Activated CD4-positive, alpha-beta memory T cell treated with anti-CD3 and anti-CD28 coated beads for 36 hours (primary cell): ENCODE measurements at regions of chr7 and their contacts with region 1.

Region 1: DNA sequence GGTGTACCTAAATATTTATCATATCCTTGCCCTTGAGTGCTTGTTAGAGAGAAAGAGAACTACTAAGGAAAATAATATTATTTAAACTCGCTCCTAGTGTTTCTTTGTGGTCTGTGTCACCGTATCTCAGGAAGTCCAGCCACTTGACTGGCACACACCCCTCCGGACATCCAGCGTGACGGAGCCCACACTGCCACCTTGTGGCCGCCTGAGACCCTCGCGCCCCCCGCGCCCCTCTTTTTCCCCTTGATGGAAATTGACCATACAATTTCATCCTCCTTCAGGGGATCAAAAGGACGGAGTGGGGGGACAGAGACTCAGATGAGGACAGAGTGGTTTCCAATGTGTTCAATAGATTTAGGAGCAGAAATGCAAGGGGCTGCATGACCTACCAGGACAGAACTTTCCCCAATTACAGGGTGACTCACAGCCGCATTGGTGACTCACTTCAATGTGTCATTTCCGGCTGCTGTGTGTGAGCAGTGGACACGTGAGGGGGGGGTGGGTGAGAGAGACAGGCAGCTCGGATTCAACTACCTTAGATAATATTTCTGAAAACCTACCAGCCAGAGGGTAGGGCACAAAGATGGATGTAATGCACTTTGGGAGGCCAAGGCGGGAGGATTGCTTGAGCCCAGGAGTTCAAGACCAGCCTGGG is 11.4 kb downstream of the SERPINE1 start:
- DNase-seq: peak; percentile 94
- H3K4me3 Mint-ChIP-seq: peak overlapping the region; percentile 30
- H3K27ac Mint-ChIP-seq: peak overlapping the region; percentile 72
- H3K4me1 Mint-ChIP-seq: peaks cover 47% of the 10 kb centered on the region
- H3K27me3 Mint-ChIP-seq: peaks cover 16% of the 10 kb centered on the region

Region 2: GRCh38 chr7:101094416-101095375 is 43.6 kb before region 1 on chr7:
- CTCF ChIA-PET with region 1: interaction called, 9 read pairs
- POLR2A ChIA-PET with region 1: no interaction called
- intact Hi-C with region 1: loop called (anchors 1 kb)
- DNase-seq: peak; percentile 58
- H3K4me3 Mint-ChIP-seq: no peak overlapping the region
- H3K27ac Mint-ChIP-seq: no peak overlapping the region
- H3K4me1 Mint-ChIP-seq: peaks cover 12% of the 10 kb centered on the region
- H3K27me3 Mint-ChIP-seq: no peaks in the 10 kb centered on the region

Region 3: DNA sequence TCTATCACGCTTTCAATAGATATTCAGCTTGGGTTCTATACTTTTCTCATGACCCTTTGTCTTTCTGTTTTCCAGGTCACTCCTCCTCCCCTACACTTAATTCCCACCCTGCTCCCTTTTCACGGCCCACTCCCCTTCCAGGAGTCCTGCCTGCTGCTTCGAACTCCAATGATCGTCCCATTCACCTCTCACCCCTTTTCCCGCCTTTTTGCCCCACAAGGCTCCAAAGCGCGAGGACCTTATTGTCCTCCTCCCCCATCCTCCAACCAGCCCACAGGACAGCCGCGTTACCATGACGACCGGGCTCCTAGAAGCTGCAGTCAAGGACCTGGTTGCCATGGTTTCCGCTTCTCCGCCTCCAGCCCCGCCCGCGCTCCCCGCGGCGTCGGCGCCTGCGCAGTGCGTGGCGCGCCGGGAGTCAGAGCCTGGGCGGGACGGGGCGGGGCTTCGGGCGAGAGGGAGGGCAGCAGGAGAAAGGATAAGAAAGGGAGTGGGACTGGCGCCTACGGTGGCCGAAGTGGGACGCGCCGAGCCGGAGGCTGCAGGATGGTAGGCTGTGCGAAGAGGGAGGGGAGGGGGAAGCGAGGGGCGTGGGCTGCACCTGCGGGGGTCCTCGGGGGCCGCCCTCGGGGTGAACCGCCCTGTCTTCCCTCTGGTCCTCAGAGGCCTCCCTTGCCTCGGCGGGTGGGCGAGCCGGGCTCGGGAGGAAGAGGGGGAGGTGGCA is 15.8 kb after region 1 on chr7 and contains the start of gene AP1S1:
- CTCF ChIA-PET with region 1: interaction called, 34 read pairs
- POLR2A ChIA-PET with region 1: no interaction called
- intact Hi-C with region 1: loop called (anchors 1 kb)
- DNase-seq: peak; percentile 96
- H3K4me3 Mint-ChIP-seq: peak within 1 kb of the TSS; percentile 79
- H3K27ac Mint-ChIP-seq: peak within 1 kb of the TSS; percentile 47
- H3K4me1 Mint-ChIP-seq: peaks cover 10% of the 10 kb centered on the region
- H3K27me3 Mint-ChIP-seq: peaks cover 4% of the 10 kb centered on the region
- total RNA-seq, gene AP1S1: 41.1 to 44.7 TPM

Region 4: GRCh38 chr7:101173752-101174244 is 35.5 kb after region 1 on chr7:
- CTCF ChIA-PET with region 1: interaction called, 27 read pairs
- POLR2A ChIA-PET with region 1: no interaction called
- intact Hi-C with region 1: no loop called
- DNase-seq: peak; percentile 86
- H3K4me3 Mint-ChIP-seq: no peak overlapping the region
- H3K27ac Mint-ChIP-seq: no peak overlapping the region
- H3K4me1 Mint-ChIP-seq: peaks cover 46% of the 10 kb centered on the region
- H3K27me3 Mint-ChIP-seq: peaks cover 74% of the 10 kb centered on the region

Region 5: GRCh38 chr7:101201695-101202604 is 63.6 kb after region 1 on chr7:
- CTCF ChIA-PET with region 1: interaction called, 297 read pairs
- POLR2A ChIA-PET with region 1: no interaction called
- intact Hi-C with region 1: no loop called
- DNase-seq: no peak
- H3K4me3 Mint-ChIP-seq: no peak overlapping the region
- H3K27ac Mint-ChIP-seq: no peak overlapping the region
- H3K4me1 Mint-ChIP-seq: peaks cover 10% of the 10 kb centered on the region
- H3K27me3 Mint-ChIP-seq: peaks cover 18% of the 10 kb centered on the region

Region 6: GRCh38 chr7:101235050-101235449 is 96.7 kb after region 1 on chr7:
- CTCF ChIA-PET with region 1: no interaction called
- POLR2A ChIA-PET with region 1: no interaction called
- intact Hi-C with region 1: no loop called
- DNase-seq: no peak
- H3K4me3 Mint-ChIP-seq: no peak overlapping the region
- H3K27ac Mint-ChIP-seq: no peak overlapping the region
- H3K4me1 Mint-ChIP-seq: no peaks in the 10 kb centered on the region
- H3K27me3 Mint-ChIP-seq: no peaks in the 10 kb centered on the region

Region 7: GRCh38 chr7:101251871-101252659 is 113.7 kb after region 1 on chr7:
- CTCF ChIA-PET with region 1: interaction called, 10 read pairs
- POLR2A ChIA-PET with region 1: no interaction called
- intact Hi-C with region 1: no loop called
- DNase-seq: peak; percentile 99
- H3K4me3 Mint-ChIP-seq: peak overlapping the region; percentile 95
- H3K27ac Mint-ChIP-seq: peak overlapping the region; percentile 92
- H3K4me1 Mint-ChIP-seq: peaks cover 20% of the 10 kb centered on the region
- H3K27me3 Mint-ChIP-seq: peaks cover 3% of the 10 kb centered on the region

Region 8: GRCh38 chr7:101294039-101294831 is 155.9 kb after region 1 on chr7:
- CTCF ChIA-PET with region 1: interaction called, 19 read pairs
- POLR2A ChIA-PET with region 1: no interaction called
- intact Hi-C with region 1: loop called (anchors 5 kb)
- DNase-seq: no peak
- H3K4me3 Mint-ChIP-seq: no peak overlapping the region
- H3K27ac Mint-ChIP-seq: no peak overlapping the region
- H3K4me1 Mint-ChIP-seq: peaks cover 14% of the 10 kb centered on the region
- H3K27me3 Mint-ChIP-seq: peaks cover 36% of the 10 kb centered on the region